Activated CD8-positive, alpha-beta T cell treated with anti-CD3 and anti-CD28 coated beads for 36 hours (primary cell): ENCODE measurements at regions of chr9 and their contacts with region 1.

Region 1: GRCh38 chr9:99118782-99119466 is 14.0 kb downstream of the TGFBR1 start:
- DNase-seq: peak; percentile 77
- ATAC-seq: peak; percentile 97
- H3K4me3 Mint-ChIP-seq: peak overlapping the region; percentile 62
- H3K27ac Mint-ChIP-seq: peak overlapping the region; percentile 95
- H3K4me1 Mint-ChIP-seq: peaks cover 90% of the 10 kb centered on the region
- H3K27me3 Mint-ChIP-seq: no peaks in the 10 kb centered on the region
- CTCF ChIP-seq: no peak

Region 2: DNA sequence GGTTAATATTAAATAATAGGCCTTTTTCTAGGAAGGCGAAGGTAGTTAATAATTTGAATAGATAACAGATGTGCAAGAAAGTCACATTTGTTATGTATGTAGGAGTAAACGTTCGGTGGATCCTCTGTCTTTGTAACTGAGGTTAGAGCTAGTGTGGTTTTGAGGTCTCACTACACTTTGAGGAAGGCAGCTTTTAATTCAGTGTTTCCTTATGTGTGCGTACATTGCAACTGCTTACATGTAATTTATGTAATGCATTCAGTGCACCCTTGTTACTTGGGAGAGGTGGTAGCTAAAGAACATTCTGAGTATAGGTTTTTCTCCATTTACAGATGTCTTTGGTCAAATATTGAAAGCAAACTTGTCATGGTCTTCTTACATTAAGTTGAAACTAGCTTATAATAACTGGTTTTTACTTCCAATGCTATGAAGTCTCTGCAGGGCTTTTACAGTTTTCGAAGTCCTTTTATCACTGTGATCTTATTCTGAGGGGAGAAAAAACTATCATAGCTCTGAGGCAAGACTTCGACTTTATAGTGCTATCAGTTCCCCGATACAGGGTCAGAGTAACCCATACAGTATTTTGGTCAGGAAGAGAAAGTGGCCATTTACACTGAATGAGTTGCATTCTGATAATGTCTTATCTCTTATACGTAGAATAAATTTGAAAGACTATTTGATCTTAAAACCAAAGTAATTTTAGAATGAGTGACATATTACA is 31.7 kb after region 1 on chr9:
- CTCF ChIA-PET with region 1: interaction called, 3 read pairs
- POLR2A ChIA-PET with region 1: interaction called, 4 read pairs
- intact Hi-C with region 1: loop called (anchors 5 kb)
- DNase-seq: no peak
- ATAC-seq: peak; percentile 90
- H3K4me3 Mint-ChIP-seq: peak overlapping the region; percentile 32
- H3K27ac Mint-ChIP-seq: peak overlapping the region; percentile 55
- H3K4me1 Mint-ChIP-seq: peaks cover 42% of the 10 kb centered on the region
- H3K27me3 Mint-ChIP-seq: no peaks in the 10 kb centered on the region
- CTCF ChIP-seq: no peak